ENCODE measurements at regions of chr5 and their contacts with region 1.

Region 1: DNA sequence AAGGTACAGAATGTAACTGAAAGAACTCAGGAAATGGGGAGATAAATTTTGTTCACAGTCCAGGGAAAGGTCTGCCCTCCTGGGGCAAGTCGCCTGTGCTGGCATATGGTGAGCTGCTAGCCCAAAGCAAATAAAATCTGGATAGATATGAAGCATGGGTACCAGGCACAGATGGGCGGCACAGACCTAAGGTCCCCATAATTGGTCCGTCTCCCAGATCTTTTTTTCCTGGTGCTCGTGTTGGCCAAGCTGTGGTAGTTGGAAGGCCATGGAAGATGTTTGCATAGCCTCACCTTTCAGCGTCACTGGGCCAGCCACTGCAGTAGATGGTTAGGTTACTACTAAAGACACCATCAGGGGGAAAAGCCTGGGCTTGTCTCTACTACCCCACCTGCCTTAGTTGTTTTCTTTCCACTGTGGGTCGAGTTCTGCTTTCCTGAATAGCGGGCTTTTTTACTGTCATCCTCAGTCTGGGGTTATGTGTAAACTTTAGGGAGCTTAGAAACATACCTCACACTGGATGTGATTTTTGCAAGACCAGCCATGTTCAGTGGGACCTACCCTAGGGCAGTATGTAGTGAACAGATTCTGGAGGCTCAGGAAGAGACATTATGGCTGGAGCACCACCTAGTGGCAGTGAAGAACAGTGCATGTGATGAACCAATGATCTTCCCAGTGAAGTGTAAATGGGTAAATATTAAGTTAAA is 24.2 kb upstream of the GLRX start:
- DNase-seq: peak; percentile 76
- H3K4me3 Mint-ChIP-seq: no peak overlapping the region
- H3K27ac Mint-ChIP-seq: peak overlapping the region; percentile 62
- H3K4me1 Mint-ChIP-seq: peaks cover 15% of the 10 kb centered on the region
- H3K27me3 Mint-ChIP-seq: no peaks in the 10 kb centered on the region

Region 2: DNA sequence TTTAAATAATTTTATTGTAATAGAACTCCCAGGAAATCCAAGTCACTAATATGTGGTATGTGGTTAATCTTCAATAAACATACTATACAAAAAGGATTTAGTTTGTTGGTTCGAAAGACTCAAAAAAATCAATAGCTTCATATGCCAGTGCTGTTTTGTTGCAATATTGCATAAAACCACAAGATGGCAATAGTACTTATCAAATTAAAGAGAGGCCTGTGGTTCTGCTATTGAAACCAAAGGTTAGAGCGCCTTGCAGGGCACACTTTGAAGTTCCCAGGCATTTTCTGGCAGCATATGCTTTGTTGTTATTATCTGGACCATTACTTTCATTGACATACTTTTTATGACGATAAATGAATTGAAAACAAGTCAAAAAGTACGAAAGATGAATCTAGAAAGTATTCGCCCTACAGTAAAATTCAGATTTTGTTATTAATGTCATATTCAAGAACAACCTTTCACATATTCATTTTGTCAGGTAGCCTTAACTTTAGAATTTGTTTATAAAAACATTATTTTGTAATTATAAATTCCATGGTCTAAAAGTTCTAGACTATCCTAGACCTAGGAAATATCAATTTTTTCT is 878.1 kb before region 1 on chr5:
- CTCF ChIA-PET with region 1: no interaction called
- POLR2A ChIA-PET with region 1: no interaction called
- intact Hi-C with region 1: loop called (anchors 2 kb)
- DNase-seq: no peak
- H3K4me3 Mint-ChIP-seq: no peak overlapping the region
- H3K27ac Mint-ChIP-seq: no peak overlapping the region
- H3K4me1 Mint-ChIP-seq: no peaks in the 10 kb centered on the region
- H3K27me3 Mint-ChIP-seq: no peaks in the 10 kb centered on the region

Region 3: DNA sequence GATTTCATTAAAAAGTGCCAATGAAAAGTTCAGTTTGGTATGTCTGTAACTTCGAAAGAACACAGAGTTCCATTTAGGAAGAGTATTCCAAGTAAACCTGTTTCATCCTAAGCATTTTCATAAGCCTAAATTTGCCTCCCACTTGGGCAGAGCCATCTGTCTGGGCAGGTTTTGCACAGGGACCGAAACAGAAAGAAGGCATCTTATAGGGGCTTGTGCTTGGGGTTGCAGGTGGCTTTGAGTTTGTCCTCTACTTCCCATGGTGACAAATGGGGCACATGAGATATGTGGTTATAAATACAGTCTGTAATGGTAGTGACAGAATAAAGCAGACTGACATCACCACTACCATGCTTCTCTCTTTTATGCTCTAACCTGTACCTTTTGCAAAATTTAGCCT is 625.5 kb before region 1 on chr5:
- CTCF ChIA-PET with region 1: no interaction called
- POLR2A ChIA-PET with region 1: no interaction called
- intact Hi-C with region 1: no loop called
- DNase-seq: no peak
- H3K4me3 Mint-ChIP-seq: no peak overlapping the region
- H3K27ac Mint-ChIP-seq: no peak overlapping the region
- H3K4me1 Mint-ChIP-seq: no peaks in the 10 kb centered on the region
- H3K27me3 Mint-ChIP-seq: no peaks in the 10 kb centered on the region

Region 4: DNA sequence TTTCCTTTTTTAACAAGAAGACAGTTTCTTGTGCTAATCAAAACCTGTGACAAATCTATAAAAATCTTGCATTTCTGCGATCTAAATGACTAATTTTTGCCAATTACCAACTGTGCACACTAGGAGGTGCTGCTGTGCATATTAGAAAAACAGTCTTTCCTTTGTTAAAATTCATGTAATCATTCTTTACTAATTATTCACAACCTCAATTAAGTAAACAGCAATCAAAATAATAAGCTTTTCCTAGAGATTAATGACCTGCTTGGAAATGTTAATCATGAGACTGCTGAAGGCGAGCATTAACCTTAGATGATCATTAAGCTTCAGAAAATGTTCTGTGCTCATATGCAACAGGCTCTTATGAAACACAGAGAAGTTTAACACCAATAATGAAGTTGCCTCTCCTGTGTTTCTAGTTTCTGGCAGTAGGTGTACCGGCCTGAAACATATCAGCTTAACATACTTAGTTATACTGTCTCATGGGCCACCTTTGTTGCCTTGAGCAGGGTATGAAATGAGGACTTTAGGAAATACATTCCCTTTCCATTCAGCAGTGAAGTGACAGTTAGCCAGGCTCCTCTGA is 182.4 kb before region 1 on chr5:
- CTCF ChIA-PET with region 1: interaction called, 41 read pairs
- POLR2A ChIA-PET with region 1: no interaction called
- intact Hi-C with region 1: loop called (anchors 1 kb)
- DNase-seq: no peak
- H3K4me3 Mint-ChIP-seq: no peak overlapping the region
- H3K27ac Mint-ChIP-seq: no peak overlapping the region
- H3K4me1 Mint-ChIP-seq: peaks cover 1% of the 10 kb centered on the region
- H3K27me3 Mint-ChIP-seq: no peaks in the 10 kb centered on the region

Region 5: GRCh38 chr5:95760273-95761191 is 86.2 kb before region 1 on chr5:
- CTCF ChIA-PET with region 1: interaction called, 3 read pairs
- POLR2A ChIA-PET with region 1: no interaction called
- intact Hi-C with region 1: loop called (anchors 1 kb)
- DNase-seq: no peak
- H3K4me3 Mint-ChIP-seq: peak overlapping the region; percentile 57
- H3K27ac Mint-ChIP-seq: peak overlapping the region; percentile 64
- H3K4me1 Mint-ChIP-seq: peaks cover 23% of the 10 kb centered on the region
- H3K27me3 Mint-ChIP-seq: peaks cover 4% of the 10 kb centered on the region

Region 6: GRCh38 chr5:95822542-95823181 is 24.0 kb before region 1 on chr5 and contains the start of gene GLRX:
- CTCF ChIA-PET with region 1: interaction called, 6 read pairs
- POLR2A ChIA-PET with region 1: interaction called, 3 read pairs
- intact Hi-C with region 1: loop called (anchors 1 kb)
- DNase-seq: peak; percentile 61
- H3K4me3 Mint-ChIP-seq: peak within 1 kb of the TSS; percentile 94
- H3K27ac Mint-ChIP-seq: peak within 1 kb of the TSS; percentile 90
- H3K4me1 Mint-ChIP-seq: peaks cover 65% of the 10 kb centered on the region
- H3K27me3 Mint-ChIP-seq: no peaks in the 10 kb centered on the region
- total RNA-seq, gene GLRX: 33.2 to 34.0 TPM

Region 7: GRCh38 chr5:96264047-96264446 is 417.3 kb after region 1 on chr5:
- CTCF ChIA-PET with region 1: no interaction called
- POLR2A ChIA-PET with region 1: no interaction called
- intact Hi-C with region 1: no loop called
- DNase-seq: no peak
- H3K4me3 Mint-ChIP-seq: no peak overlapping the region
- H3K27ac Mint-ChIP-seq: no peak overlapping the region
- H3K4me1 Mint-ChIP-seq: peaks cover 2% of the 10 kb centered on the region
- H3K27me3 Mint-ChIP-seq: peaks cover 7% of the 10 kb centered on the region